AG04449 (cell line): ENCODE measurements at regions of chr17 and their contacts with region 1.

Region 1: DNA sequence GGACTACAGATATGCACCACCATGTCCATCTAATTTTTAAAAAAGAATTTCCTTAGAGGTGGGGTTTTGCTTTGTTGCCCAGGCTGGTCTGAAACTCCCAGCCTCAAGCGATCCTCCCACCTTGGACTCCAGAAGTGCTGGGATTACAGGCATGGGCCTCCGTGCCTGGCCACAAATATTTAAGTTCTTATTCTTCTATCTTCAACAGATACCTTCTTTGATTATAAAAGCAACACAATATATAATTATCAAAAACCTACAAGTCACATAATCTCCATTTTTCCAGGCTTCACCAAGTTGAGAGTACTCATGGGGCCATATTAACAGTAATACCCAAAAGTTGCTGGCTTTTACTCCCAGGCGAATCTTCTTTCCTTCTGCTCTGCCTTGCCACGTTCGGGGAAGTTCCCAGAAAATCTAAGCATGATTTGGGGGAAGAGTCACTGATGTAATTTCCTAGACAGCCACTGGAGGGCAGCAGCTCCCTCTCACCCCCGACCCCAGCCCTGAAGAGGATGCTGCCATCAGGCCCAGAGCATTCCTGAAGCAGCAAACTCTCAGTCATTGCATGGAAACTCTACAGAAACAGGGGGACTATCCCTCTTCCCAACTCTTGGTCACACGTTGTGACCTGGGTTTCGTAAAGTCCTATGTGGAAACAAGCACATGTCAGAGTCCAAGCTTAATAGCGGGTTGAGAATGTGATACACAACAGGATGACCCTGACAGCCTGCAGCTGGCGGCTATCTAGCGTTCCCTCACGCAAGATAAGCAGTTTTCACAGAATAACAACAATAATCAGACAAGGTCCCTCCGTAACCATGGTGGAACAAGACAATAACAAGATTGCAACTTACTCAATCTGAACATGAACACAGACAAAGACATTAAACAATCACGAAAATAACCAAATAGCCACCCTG is 43.9 kb upstream of the DHX40 start:
- DNase-seq: no peak
- H3K4me3 ChIP-seq: no peak overlapping the region
- CTCF ChIP-seq: peak; percentile 81

Region 2: DNA sequence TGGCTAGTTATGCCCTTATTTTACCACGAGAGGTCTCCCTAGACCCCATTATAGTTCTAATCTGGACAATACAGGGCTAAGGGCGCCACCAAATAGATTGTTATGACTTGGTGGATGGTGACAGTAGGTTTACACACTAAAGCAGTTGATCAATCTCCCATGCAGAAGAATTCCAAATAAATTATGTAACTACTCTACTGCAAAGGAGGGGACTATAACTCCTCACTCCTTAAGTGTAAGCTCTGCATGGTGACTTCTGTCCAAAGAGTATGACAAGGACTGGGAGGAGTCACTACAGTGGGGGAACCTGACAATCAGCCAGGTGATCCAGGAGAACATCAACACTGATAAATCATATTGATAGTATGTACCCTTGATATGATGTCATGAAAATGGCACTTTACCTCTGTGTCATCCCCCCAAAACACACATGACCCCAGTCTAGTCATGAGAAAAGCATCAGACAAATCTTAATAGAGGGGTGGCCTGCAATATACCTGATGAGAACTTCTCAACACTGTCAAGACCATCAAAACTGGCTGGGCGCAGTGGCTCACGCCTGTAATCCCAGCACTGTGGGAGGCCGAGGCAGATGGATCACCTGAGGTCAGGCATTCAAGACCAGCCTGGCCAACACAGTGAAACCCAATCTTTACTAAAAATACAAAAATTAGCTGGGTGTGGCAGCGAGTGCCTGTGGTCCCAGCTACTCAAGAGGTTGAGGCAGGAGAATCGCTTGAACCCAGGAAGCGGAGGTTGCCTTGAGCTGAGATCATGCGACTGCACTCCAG is 210.1 kb before region 1 on chr17:
- CTCF ChIA-PET with region 1: interaction called, 11 read pairs
- POLR2A ChIA-PET with region 1: no interaction called
- DNase-seq: peak; percentile 5
- H3K4me3 ChIP-seq: no peak overlapping the region
- CTCF ChIP-seq: no peak

Region 3: GRCh38 chr17:59506894-59507726 is 14.4 kb before region 1 on chr17:
- CTCF ChIA-PET with region 1: interaction called, 24 read pairs
- POLR2A ChIA-PET with region 1: no interaction called
- DNase-seq: no peak
- H3K4me3 ChIP-seq: no peak overlapping the region
- CTCF ChIP-seq: no peak

Region 4: GRCh38 chr17:59534598-59534997 is 13.1 kb after region 1 on chr17:
- CTCF ChIA-PET with region 1: interaction called, 14 read pairs
- POLR2A ChIA-PET with region 1: no interaction called
- DNase-seq: no peak
- H3K4me3 ChIP-seq: no peak overlapping the region
- CTCF ChIP-seq: no peak

Region 5: DNA sequence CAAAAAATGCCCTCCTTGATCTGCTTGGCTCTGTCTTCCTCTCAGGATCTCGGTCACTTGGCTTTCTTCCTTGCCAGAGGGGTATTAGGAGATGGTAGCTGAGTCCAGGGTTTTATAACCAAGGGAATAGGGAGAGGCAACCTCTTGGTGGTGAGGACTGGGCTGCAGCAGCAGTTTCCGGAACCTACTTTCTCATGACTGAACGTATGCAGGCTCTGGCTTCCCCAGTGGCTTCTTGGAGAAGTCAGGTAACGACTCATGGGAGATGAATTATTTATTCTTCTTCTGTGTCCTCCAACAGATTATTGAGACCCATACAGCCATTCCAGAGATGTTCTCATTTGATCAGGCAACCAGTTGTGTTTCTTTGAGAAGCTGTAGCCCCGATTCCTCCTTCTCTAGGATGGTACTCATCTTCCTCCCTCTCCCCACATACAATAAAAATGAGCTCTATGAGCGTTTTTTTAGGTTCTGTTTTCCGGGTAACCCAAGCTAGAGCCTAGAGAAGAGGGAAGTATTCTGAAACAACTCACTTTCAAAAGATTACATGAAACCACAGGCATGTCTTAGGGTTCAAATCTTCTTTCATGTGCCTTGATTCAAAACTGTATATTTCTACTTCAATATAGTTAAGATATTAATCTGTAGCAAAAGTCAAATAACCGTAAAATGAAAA is 21.6 kb after region 1 on chr17:
- CTCF ChIA-PET with region 1: interaction called, 14 read pairs
- POLR2A ChIA-PET with region 1: no interaction called
- DNase-seq: no peak
- H3K4me3 ChIP-seq: no peak overlapping the region
- CTCF ChIP-seq: no peak

Region 6: DNA sequence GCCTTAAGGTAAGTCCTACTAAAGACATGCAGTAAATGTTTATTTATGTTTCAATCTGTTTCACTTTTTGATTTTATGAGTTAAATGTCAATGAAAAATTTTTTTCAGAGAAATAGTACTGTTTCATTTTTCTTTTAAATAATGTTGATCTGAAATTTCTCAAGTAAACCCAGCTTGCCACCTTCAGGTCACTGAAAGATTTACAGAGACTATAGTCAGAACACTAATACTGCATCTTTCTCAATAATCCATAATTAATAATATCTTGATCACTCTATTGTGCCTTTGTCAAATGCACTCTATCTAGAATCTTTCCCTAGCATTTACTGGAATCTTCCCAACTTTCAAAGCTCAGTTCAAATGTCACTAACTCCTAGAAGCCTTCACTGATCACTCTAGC is 37.5 kb after region 1 on chr17:
- CTCF ChIA-PET with region 1: interaction called, 16 read pairs
- POLR2A ChIA-PET with region 1: no interaction called
- DNase-seq: no peak
- H3K4me3 ChIP-seq: no peak overlapping the region
- CTCF ChIP-seq: peak; percentile 19

Region 7: GRCh38 chr17:59641799-59642489 is 120.5 kb after region 1 on chr17:
- CTCF ChIA-PET with region 1: no interaction called
- POLR2A ChIA-PET with region 1: no interaction called
- DNase-seq: no peak
- H3K4me3 ChIP-seq: no peak overlapping the region
- CTCF ChIP-seq: no peak

Region 8: GRCh38 chr17:59746849-59747445 is 225.5 kb after region 1 on chr17:
- CTCF ChIA-PET with region 1: no interaction called
- POLR2A ChIA-PET with region 1: no interaction called
- DNase-seq: no peak
- H3K4me3 ChIP-seq: no peak overlapping the region
- CTCF ChIP-seq: peak; percentile 52